Activated naive CD4-positive, alpha-beta T cell treated with anti-CD3 and anti-CD28 coated beads, Interleukin-2, amount 10 ng/mL, durations not matched to agents 7 days and 5 days (primary cell): ENCODE measurements at regions of chr3 and their contacts with region 1.

Region 1: GRCh38 chr3:13461169-13462158 is 18.6 kb upstream of the HDAC11 start:
- DNase-seq: peak; percentile 86
- H3K4me3 Mint-ChIP-seq: no peak overlapping the region
- H3K27ac Mint-ChIP-seq: no peak overlapping the region
- H3K4me1 Mint-ChIP-seq: peaks cover 3% of the 10 kb centered on the region
- H3K27me3 Mint-ChIP-seq: peaks cover 61% of the 10 kb centered on the region

Region 2: GRCh38 chr3:13091898-13092611 is 369.4 kb before region 1 on chr3:
- CTCF ChIA-PET with region 1: interaction called, 36 read pairs
- DNase-seq: peak; percentile 89
- H3K4me3 Mint-ChIP-seq: no peak overlapping the region
- H3K27ac Mint-ChIP-seq: no peak overlapping the region
- H3K4me1 Mint-ChIP-seq: peaks cover 6% of the 10 kb centered on the region
- H3K27me3 Mint-ChIP-seq: peaks cover 49% of the 10 kb centered on the region

Region 3: DNA sequence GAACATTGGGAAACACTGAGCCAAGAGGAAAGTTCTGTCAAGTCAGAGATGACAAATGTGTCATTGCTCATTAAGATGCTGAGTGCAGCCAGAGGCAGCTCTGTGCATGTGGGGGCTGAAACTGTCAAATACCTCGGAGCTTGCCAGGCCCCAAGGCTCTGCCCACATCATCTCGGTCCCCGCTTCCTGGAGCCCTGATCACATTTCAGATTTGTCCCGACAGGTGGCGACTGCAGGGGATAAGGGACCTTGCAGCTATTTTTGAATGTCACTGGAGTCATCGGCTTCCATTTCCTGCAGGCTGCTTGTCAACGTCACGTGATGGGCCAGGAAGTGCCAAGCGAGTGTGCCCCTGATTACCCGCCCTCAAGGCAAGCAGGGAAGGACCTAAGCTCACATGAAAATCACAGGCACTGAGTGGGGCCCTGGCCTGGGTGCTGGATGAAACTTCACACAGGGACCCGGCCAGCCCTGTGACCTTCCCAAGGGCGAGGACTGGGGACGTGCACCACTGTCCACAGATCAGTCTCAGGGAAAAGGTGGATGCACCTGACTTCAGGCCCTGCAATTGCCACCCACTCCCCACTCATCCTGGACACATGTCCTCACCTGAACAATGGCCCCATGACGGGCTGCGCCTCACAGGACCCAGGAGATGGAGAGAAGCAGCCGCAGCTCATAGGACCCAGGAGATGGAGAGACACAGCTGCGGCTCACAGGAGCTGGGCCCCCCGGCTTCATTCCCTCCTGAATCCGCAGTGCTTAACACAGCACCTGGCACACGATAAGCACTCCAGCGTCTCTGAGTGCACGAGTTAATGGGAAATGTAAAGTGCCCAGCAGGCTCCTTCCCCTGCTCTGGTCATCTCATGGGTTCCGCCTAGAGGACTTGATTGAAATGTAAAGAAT is 114.7 kb before region 1 on chr3:
- CTCF ChIA-PET with region 1: interaction called, 13 read pairs
- DNase-seq: peak; percentile 88
- H3K4me3 Mint-ChIP-seq: no peak overlapping the region
- H3K27ac Mint-ChIP-seq: peak overlapping the region; percentile 93
- H3K4me1 Mint-ChIP-seq: peaks cover 66% of the 10 kb centered on the region
- H3K27me3 Mint-ChIP-seq: no peaks in the 10 kb centered on the region

Region 4: GRCh38 chr3:13391308-13391707 is 70.2 kb before region 1 on chr3:
- CTCF ChIA-PET with region 1: interaction called, 21 read pairs
- DNase-seq: peak; percentile 43
- H3K4me3 Mint-ChIP-seq: no peak overlapping the region
- H3K27ac Mint-ChIP-seq: peak overlapping the region; percentile 49
- H3K4me1 Mint-ChIP-seq: peaks cover 17% of the 10 kb centered on the region
- H3K27me3 Mint-ChIP-seq: no peaks in the 10 kb centered on the region

Region 5: GRCh38 chr3:13666781-13667709 is 205.6 kb after region 1 on chr3:
- CTCF ChIA-PET with region 1: no interaction called
- DNase-seq: no peak
- H3K4me3 Mint-ChIP-seq: no peak overlapping the region
- H3K27ac Mint-ChIP-seq: no peak overlapping the region
- H3K4me1 Mint-ChIP-seq: no peaks in the 10 kb centered on the region
- H3K27me3 Mint-ChIP-seq: peaks cover 20% of the 10 kb centered on the region

Region 6: DNA sequence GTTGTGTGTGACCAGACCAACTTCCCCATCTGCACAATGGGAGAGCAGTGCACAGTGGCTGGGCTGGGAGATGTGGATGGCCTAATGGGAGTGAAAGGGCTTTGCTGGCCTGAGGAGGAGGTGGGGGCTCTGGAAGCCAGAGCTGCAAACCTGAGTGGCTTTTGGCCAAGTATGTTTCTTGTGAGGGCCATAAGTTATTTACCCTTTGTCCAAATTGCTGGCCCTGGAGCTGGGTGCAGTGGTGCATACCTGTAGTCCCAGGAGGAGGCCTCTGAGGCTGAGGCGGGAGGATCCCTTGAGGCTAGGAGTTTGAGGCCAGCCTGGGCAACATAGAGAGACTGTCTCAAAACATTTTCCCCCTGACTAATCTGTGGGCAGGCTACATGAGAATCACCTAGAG is 289.3 kb after region 1 on chr3:
- CTCF ChIA-PET with region 1: no interaction called
- DNase-seq: no peak
- H3K4me3 Mint-ChIP-seq: no peak overlapping the region
- H3K27ac Mint-ChIP-seq: no peak overlapping the region
- H3K4me1 Mint-ChIP-seq: no peaks in the 10 kb centered on the region
- H3K27me3 Mint-ChIP-seq: peaks cover 7% of the 10 kb centered on the region